ENCODE measurements at regions of chr1 and their contacts with region 1.

Region 1: DNA sequence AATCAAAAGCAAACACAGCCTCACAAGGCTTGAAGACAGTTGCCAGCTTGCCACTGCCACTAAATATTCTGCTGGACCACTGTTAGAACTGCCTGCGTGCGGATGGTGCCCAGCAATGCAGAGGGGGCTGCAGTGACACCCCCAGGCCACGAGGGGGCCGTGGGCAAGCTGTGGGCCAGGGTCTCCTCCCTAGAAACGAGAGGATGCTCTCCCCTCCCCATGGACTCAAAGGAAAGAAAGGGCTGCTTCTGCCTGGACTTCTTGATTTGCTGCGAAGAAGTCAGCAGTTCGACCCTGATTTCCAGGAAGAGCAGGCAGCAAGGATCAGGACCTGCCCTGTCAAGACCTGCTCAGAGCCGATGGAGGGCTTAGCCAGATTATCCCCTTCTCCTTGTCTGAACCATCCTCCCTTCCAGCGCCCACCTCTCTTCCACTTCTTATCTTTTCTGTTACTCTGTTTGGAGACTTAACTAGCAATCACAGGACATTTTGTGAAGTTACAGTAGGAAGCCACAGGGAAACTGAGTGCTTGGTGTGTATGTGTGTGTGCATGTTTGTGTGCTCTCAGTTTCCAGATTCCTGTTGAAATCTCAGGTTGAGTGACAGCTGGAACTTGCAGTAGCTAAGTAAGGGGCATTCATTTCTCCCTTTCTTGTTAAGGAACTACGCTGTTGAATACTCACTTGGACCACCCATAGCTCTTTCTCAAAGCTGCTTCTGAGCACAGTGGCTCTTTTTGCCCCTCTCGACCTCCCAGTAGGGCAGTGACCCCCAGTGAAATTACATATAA is 2.7 kb downstream of the MAN1C1 start:
- DNase-seq: peak; percentile 61
- ATAC-seq: peak; percentile 19
- H3K4me3 Mint-ChIP-seq: peak overlapping the region; percentile 78
- H3K27ac Mint-ChIP-seq: peak overlapping the region; percentile 50
- H3K4me1 Mint-ChIP-seq: peaks cover 79% of the 10 kb centered on the region
- H3K27me3 Mint-ChIP-seq: peaks cover 3% of the 10 kb centered on the region
- CTCF ChIP-seq: peak; percentile 94

Region 2: GRCh38 chr1:25538191-25538761 is 81.0 kb before region 1 on chr1:
- CTCF ChIA-PET with region 1: no interaction called
- POLR2A ChIA-PET with region 1: no interaction called
- intact Hi-C with region 1: no loop called
- DNase-seq: no peak
- ATAC-seq: no peak
- H3K4me3 Mint-ChIP-seq: no peak overlapping the region
- H3K27ac Mint-ChIP-seq: no peak overlapping the region
- H3K4me1 Mint-ChIP-seq: peaks cover 7% of the 10 kb centered on the region
- H3K27me3 Mint-ChIP-seq: no peaks in the 10 kb centered on the region
- CTCF ChIP-seq: no peak

Region 3: DNA sequence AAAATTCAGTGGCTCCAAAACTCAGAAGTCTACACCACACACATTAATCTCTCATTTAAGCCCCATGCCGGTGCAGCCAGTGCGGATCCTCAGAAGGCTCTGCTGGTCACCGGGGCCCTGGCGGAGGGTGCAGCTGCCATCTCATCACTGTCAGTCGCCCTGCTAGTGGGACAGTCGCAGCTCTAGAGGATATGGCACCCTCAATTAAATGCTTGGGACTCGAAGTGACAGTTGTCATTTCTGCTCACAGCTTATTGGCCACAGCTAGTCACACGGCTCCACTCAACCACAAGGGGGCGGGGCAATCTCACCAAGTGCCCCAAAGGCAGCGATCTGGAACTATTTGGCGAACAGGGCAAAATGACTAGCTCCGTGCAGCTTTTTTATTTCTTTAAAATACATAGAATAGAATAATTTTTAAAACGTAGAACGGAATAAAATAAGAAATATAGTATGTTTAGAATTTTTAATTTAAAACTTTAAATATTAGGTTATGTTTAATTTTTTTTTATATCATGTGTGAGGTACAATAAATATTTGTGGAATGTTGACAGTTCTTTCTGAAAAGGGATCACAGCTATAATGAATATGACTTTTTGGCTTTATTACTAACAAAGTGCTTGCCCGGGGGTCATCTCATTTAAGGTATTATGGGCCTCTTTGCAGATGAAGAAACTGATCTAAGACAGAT is 10.7 kb before region 1 on chr1:
- CTCF ChIA-PET with region 1: interaction called, 25 read pairs
- POLR2A ChIA-PET with region 1: interaction called, 3 read pairs
- intact Hi-C with region 1: no loop called
- DNase-seq: peak; percentile 97
- ATAC-seq: peak; percentile 98
- H3K4me3 Mint-ChIP-seq: no peak overlapping the region
- H3K27ac Mint-ChIP-seq: no peak overlapping the region
- H3K4me1 Mint-ChIP-seq: peaks cover 16% of the 10 kb centered on the region
- H3K27me3 Mint-ChIP-seq: peaks cover 16% of the 10 kb centered on the region
- CTCF ChIP-seq: peak; percentile 28

Region 4: DNA sequence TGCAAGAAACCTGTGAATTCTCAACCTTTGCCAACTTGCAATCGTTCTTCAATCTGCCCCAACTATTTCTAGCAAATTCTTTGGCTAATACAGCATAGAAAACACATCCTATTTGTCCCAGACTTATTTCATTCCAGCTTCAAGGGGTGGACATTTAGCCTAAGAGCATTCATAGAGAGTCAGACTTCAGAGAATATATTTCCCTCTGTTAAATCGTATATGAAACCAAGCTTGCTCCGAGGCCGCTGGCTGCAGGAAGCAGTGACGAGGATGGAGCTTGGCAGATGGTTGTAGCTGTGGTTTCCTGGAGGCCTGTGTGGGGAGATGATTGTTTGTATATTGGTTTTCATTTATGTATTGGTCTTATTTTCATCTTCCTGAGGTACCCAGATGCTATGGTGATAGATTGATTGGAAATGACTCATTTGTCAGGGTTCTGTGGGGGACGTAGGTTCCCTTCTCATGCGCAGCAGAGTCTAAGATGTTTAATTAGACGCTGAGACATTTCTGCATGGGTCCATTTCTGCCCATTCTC is 23.3 kb after region 1 on chr1:
- CTCF ChIA-PET with region 1: interaction called, 25 read pairs
- POLR2A ChIA-PET with region 1: interaction called, 5 read pairs
- intact Hi-C with region 1: no loop called
- DNase-seq: peak; percentile 90
- ATAC-seq: peak; percentile 91
- H3K4me3 Mint-ChIP-seq: peak overlapping the region; percentile 40
- H3K27ac Mint-ChIP-seq: peak overlapping the region; percentile 62
- H3K4me1 Mint-ChIP-seq: peaks cover 57% of the 10 kb centered on the region
- H3K27me3 Mint-ChIP-seq: peaks cover 8% of the 10 kb centered on the region
- CTCF ChIP-seq: no peak

Region 5: GRCh38 chr1:25675729-25676476 is 56.6 kb after region 1 on chr1:
- CTCF ChIA-PET with region 1: interaction called, 23 read pairs
- POLR2A ChIA-PET with region 1: interaction called, 19 read pairs
- intact Hi-C with region 1: loop called (anchors 5 kb)
- DNase-seq: peak; percentile 98
- ATAC-seq: peak; percentile 87
- H3K4me3 Mint-ChIP-seq: peak overlapping the region; percentile 43
- H3K27ac Mint-ChIP-seq: peak overlapping the region; percentile 74
- H3K4me1 Mint-ChIP-seq: peaks cover 78% of the 10 kb centered on the region
- H3K27me3 Mint-ChIP-seq: peaks cover 15% of the 10 kb centered on the region
- CTCF ChIP-seq: no peak

Region 6: DNA sequence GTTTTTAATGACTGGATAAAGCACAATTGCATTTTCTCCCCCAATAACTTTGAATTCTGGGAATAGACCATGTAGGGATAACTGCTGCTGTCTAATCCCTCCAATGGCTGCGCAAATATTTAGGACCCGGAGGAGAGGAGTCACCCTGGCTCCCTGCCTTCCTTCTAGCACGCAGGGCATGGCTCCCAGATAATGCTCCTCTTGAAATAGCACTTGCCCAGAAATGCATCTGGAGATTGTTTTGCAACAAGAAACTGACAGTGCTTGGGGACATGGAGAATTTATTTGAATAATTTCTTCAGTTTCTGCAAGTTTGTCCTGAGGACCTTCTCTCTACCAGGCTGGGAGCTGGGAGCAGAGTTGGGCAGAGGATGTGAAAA is 80.8 kb after region 1 on chr1:
- CTCF ChIA-PET with region 1: interaction called, 12 read pairs
- POLR2A ChIA-PET with region 1: interaction called, 3 read pairs
- intact Hi-C with region 1: no loop called
- DNase-seq: no peak
- ATAC-seq: no peak
- H3K4me3 Mint-ChIP-seq: no peak overlapping the region
- H3K27ac Mint-ChIP-seq: no peak overlapping the region
- H3K4me1 Mint-ChIP-seq: peaks cover 50% of the 10 kb centered on the region
- H3K27me3 Mint-ChIP-seq: no peaks in the 10 kb centered on the region
- CTCF ChIP-seq: no peak

Region 7: GRCh38 chr1:25796811-25797458 is 177.6 kb after region 1 on chr1:
- CTCF ChIA-PET with region 1: interaction called, 43 read pairs
- POLR2A ChIA-PET with region 1: interaction called, 3 read pairs
- intact Hi-C with region 1: loop called (anchors 5 kb)
- DNase-seq: peak; percentile 92
- ATAC-seq: peak; percentile 57
- H3K4me3 Mint-ChIP-seq: peak overlapping the region; percentile 45
- H3K27ac Mint-ChIP-seq: peak overlapping the region; percentile 78
- H3K4me1 Mint-ChIP-seq: peaks cover 44% of the 10 kb centered on the region
- H3K27me3 Mint-ChIP-seq: no peaks in the 10 kb centered on the region
- CTCF ChIP-seq: peak; percentile 81

Region 8: DNA sequence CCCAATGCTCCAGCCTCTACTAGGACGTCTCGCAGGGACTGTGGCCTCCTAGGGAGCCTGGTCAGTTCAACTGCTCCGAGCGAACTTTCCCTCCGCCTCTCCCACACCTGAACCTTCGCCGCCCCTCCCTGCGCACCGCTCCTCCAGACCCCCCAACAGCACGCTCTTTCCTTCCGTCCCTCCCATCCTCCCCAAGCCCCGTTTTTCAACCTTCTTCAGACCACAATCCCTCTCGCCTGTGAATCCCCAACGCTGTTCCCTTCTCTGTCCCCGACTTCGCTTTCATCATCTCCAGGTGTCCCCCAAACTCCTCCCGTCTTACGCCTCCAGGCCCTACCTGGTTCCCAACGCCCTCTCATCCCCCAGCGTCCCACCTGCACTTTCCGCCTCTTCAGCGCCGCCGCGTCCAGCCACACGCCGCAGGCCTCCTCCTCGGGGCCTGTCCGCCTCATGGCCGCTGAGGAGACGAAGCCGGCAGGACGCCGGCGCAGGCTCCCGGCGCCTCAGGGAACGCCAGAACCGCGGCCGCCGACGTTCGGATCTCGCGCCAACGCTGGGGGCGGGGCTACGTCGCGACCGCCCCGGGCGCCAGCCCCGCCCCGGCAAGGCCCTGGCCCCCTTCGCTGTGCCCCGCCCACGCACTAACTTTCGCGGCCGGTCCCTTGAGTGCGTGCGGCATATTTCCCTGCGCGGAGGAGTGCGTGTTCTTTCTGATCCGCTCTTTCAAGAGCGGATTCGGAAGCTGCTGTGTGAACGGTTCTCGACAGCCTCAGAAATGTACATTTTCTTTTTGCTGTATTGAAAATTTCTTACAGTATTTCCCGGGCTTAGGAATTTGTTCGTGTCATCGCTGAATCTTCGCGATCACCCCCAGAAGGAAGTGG is 239.9 kb after region 1 on chr1 and contains the start of gene AUNIP:
- CTCF ChIA-PET with region 1: no interaction called
- POLR2A ChIA-PET with region 1: no interaction called
- intact Hi-C with region 1: no loop called
- DNase-seq: peak; percentile 95
- ATAC-seq: peak; percentile 98
- H3K4me3 Mint-ChIP-seq: peak within 1 kb of the TSS; percentile 98
- H3K27ac Mint-ChIP-seq: peak within 1 kb of the TSS; percentile 87
- H3K4me1 Mint-ChIP-seq: peaks cover 19% of the 10 kb centered on the region
- H3K27me3 Mint-ChIP-seq: no peaks in the 10 kb centered on the region
- CTCF ChIP-seq: no peak
- total RNA-seq, gene AUNIP: 8.8 to 10.3 TPM